Calu3 (cell line): ENCODE measurements at regions of chr16 and their contacts with region 1.

Region 1: GRCh38 chr16:8768692-8769091 is 28.7 kb downstream of the TMEM186 start:
- DNase-seq: no peak
- H3K4me3 Mint-ChIP-seq: no peak overlapping the region
- H3K27ac Mint-ChIP-seq: no peak overlapping the region
- H3K4me1 Mint-ChIP-seq: no peaks in the 10 kb centered on the region
- H3K27me3 Mint-ChIP-seq: no peaks in the 10 kb centered on the region
- CTCF ChIP-seq: no peak

Region 2: GRCh38 chr16:8674413-8675022 is 94.2 kb before region 1 on chr16 and contains the start of gene ABAT:
- CTCF ChIA-PET with region 1: interaction called, 13 read pairs
- intact Hi-C with region 1: no loop called
- DNase-seq: peak; percentile 96
- H3K4me3 Mint-ChIP-seq: peak within 1 kb of the TSS; percentile 88
- H3K27ac Mint-ChIP-seq: peak within 1 kb of the TSS; percentile 73
- H3K4me1 Mint-ChIP-seq: peaks cover 51% of the 10 kb centered on the region
- H3K27me3 Mint-ChIP-seq: no peaks in the 10 kb centered on the region
- CTCF ChIP-seq: no peak
- total RNA-seq, gene ABAT: 12.6 and 14.2 TPM in 2 replicates